Posterior vena cava (tissue), 2 donors: ENCODE measurements at regions of chr12 and their contacts with region 1.

Region 1: DNA sequence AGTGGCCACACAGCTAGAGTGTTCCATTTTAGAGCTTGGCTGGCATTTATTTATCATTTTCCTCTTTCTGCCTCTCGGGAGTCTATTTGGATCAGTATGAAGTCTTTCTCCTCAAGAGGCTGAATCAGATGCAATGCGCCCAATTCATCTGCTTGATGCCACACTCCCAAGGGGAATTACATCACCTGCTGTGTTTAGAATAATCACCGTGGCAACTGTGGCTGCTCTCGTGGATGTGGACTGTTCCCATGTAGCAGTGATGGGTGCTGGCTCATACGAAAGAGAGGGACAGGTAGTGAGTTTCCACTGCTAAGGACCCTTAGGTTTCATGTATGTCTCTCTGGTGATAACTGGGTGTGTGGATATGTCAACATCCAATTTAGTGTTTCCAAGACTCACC is 70.7 kb downstream of the SRRM4 start:
- DNase-seq: no peak

Region 2: DNA sequence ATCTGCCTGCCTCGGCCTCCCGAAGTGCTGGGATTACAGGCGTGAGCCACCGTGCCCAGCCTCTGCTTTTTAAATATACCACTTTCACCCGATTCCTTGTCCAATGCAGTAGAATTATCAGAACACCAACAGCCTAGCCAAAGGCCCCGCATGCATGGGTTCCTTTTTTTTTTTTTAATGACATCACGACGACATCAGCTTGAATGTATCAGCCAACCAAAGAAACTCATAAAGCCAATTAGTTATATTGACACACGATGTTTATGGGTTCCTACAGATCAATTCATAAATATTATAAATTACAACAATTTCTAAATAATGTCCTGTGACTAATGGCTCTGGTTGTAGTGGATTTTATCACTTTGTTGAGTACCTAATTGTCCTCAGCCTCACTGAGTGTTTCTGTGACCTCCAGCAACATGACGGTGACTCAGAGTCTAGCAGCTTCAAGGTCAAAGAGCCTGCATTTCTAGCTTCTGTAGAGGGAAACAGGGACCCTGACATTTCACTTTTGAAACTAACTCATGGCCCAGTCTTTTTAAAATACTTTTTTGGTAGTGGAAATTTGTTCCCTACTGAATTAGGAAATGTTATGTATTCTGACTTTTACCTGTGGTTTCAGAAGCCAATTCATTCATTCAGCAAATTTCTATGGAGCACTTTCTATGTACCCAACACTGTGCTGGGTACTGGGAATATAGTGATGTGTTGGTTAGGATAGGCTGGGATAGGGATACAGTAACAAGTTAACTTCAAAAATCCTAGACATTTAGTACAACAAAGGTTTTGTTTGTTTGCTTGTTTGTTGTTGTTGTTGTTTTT is 531.6 kb before region 1 on chr12:
- intact Hi-C with region 1: loop called in 1 of 2 experiments (anchors 5 kb)
- DNase-seq: no peak

Region 3: DNA sequence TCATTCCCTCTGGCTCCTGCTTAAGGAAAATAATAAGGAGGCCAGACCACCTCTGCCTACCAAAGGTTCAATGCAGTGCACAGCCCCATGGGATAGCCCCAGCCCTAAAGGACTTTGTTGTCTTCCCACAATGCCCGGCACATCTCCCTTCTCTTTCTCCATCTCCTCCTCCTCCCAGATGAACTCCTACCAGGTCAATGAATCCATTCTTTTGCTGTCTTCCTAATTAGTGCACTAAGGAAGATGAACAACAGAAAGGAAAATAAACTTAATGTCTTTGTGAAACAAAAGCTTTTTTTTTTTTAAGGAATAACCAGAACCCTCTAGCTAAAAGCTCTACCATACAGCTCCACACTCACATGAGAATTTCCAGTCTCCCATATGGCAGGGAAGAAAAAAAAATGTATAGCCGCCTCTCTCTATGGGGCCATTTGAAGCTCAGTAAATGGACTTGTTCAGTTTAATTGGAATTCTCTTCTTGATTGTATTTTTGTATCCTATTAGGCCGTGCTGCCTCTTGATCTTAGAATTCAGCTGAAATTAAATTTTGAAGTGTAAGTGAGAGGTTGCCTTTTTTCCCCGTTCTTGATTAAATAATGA is 84.9 kb after region 1 on chr12:
- intact Hi-C with region 1: no loop called
- DNase-seq: no peak